MCF 10A (cell line): ENCODE measurements at regions of chr4 and their contacts with region 1.

Region 1: GRCh38 chr4:167032871-167033270 is 201.4 kb downstream of the SPOCK3 start:
- DNase-seq: peak; percentile 42
- H3K4me3 Mint-ChIP-seq: no peak overlapping the region
- H3K27ac Mint-ChIP-seq: no peak overlapping the region
- H3K4me1 Mint-ChIP-seq: peaks cover 17% of the 10 kb centered on the region
- H3K27me3 Mint-ChIP-seq: no peaks in the 10 kb centered on the region
- CTCF ChIP-seq: no peak

Region 2: DNA sequence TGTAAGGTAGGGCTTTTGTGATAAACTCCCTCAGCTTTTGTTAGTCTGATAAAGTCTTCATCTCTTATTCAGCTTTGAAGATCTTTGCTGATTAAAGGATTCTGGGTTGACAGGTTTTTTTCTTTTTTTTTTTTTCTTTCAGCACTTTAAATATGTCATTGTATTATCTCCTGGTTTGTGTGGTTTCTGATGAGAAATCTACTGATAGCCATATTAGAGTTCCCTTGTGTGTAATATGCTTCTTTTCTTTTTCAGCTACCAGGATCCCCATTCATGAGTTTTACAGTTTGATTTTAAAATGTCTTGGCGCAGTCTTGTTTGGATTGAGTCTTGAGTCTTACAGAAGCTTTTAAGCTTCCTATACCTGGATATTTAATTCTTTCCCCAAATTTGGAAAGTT is 655.3 kb before region 1 on chr4:
- CTCF ChIA-PET with region 1: no interaction called
- POLR2A ChIA-PET with region 1: no interaction called
- intact Hi-C with region 1: no loop called
- DNase-seq: no peak
- H3K4me3 Mint-ChIP-seq: no peak overlapping the region
- H3K27ac Mint-ChIP-seq: no peak overlapping the region
- H3K4me1 Mint-ChIP-seq: no peaks in the 10 kb centered on the region
- H3K27me3 Mint-ChIP-seq: no peaks in the 10 kb centered on the region
- CTCF ChIP-seq: no peak

Region 3: DNA sequence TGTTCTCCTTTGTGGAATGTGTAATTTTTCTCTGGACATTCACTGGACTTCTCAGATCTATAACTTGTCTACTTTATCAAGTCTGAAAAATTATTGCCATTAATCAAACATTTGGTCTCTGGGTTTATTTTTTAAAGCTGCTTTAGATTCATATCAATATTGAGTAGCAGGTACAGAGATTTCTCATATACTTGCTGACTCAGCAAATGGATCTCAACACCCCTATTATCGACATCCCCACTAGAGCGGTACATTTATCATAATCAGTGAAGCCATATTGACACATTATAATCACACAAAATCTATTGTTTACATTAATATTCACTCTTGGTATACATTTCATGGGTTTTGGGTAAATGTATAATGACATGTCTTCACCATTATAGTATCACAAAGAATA is 67.3 kb before region 1 on chr4:
- CTCF ChIA-PET with region 1: no interaction called
- POLR2A ChIA-PET with region 1: no interaction called
- intact Hi-C with region 1: no loop called
- DNase-seq: no peak
- H3K4me3 Mint-ChIP-seq: no peak overlapping the region
- H3K27ac Mint-ChIP-seq: no peak overlapping the region
- H3K4me1 Mint-ChIP-seq: no peaks in the 10 kb centered on the region
- H3K27me3 Mint-ChIP-seq: no peaks in the 10 kb centered on the region
- CTCF ChIP-seq: no peak

Region 4: GRCh38 chr4:167114416-167114971 is 81.6 kb after region 1 on chr4:
- CTCF ChIA-PET with region 1: no interaction called
- POLR2A ChIA-PET with region 1: no interaction called
- intact Hi-C with region 1: loop called (anchors 5 kb)
- DNase-seq: peak; percentile 8
- H3K4me3 Mint-ChIP-seq: no peak overlapping the region
- H3K27ac Mint-ChIP-seq: no peak overlapping the region
- H3K4me1 Mint-ChIP-seq: peaks cover 19% of the 10 kb centered on the region
- H3K27me3 Mint-ChIP-seq: no peaks in the 10 kb centered on the region
- CTCF ChIP-seq: no peak